ENCODE measurements at regions of chr14 and their contacts with region 1.

Region 1: GRCh38 chr14:54773171-54773975 is 129.3 kb downstream of the GCH1 start:
- DNase-seq: peak in 2 of 3 donors; percentile 71
- ATAC-seq: peak; percentile 67 to 84 (median 78)
- H3K4me3 ChIP-seq: no peak overlapping the region
- H3K27ac ChIP-seq: peak overlapping the region; percentile 32 to 45 (median 43)
- H3K4me1 ChIP-seq: peaks cover 0 to 44% (median 15%) of the 10 kb centered on the region in 4 donors
- H3K27me3 ChIP-seq: no peaks in the 10 kb centered on the region
- CTCF ChIP-seq: peak; percentile 46 to 71 (median 48)
- POLR2A ChIP-seq: no peak

Region 2: DNA sequence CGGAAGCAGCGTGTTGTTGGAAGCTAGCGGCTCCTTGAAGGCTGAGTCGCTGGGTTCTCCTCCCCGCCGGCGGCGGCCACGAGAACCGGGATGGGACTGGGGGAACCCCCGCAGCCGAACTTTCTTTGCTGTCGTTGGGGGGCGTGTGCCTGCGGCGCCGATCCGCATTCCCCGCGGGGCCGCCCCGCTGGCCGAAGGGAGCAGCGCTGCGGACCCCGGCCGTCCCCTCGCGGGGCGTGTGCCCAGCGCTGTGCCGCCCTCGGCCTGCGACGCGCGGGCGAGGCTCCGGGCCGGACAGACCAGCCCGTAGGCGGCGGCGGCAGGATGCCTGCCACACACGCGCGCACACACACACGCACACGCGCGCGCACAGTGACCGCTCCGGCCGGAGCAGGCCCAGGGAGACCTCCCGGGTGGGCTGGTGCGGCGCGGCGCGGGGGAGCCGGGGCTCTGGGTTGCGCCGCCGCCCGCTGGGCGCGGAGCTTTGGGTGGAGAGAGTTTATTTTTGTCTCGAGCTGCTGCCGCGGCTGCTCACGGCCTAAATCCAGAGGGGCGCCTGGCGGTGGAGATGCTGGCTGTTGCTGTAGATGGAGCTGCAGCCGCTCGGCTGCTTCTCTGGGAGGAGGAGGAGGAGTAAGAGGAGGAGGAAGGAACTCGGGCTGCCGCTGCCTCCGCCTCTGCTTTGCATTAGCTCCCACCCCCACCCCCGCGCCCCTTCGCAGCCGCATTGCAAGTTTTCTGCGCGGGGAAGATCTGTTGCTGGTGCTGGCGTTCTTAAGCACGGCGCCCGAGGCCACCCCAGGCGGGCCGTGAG is 206.8 kb before region 1 on chr14 and contains the start of gene SAMD4A:
- intact Hi-C with region 1: loop called (anchors 5 to 10 kb)
- DNase-seq: peak; percentile 74 to 84 (median 78)
- ATAC-seq: peak; percentile 22 to 42 (median 30)
- H3K4me3 ChIP-seq: peak within 1 kb of the TSS; percentile 51 to 73 (median 66)
- H3K27ac ChIP-seq: peak within 1 kb of the TSS; percentile 96 to 99 (median 98)
- H3K4me1 ChIP-seq: peaks cover 0 to 17% (median 0%) of the 10 kb centered on the region in 4 donors
- H3K27me3 ChIP-seq: no peaks in the 10 kb centered on the region
- CTCF ChIP-seq: peak in 3 of 4 donors; percentile 17 to 39 (median 21)
- POLR2A ChIP-seq: peak; percentile 48
- total RNA-seq, gene SAMD4A: 16.7 to 31.9 (median 21.1) TPM

Region 3: DNA sequence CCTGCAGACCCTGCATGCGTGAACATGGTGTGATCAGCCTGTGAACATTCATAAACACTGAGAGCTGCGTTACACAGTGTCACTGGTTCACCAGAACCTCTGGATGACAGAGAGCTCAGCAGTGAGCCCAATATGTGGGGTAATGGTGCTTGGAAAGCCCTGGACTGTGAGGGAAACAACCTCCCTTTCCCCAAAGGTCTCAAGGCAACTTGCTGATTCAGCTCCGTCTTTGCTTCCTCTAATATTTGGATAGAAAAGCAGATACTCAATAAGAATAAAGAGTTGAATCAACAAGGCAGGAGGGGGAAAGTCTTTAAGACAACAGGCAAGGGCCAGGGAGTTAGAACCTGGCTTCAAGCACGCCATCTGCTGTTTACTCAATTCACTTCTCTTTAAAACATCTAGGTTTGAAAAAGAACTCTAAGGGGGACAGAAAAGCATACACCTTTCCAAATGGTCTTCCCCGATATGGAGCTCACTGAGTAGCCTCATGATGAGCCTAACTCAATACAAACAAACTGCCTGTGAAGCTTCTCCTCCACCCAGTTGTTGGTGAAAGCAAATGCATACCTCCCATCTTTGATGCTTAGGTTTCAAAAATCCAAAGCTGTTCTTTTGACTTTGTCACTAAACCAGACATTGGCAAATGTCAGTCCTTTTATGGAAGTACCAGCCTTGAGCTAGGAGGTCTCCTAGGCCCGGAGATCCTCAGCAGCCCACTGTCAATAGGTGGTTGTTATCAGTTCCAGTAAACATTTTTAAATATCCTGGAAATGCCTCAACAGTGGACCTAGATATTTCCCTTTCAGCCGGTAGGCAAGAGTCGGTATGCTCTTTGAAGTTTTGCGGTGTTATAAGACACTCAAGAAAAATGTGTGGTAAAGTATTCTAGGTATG is 130.3 kb before region 1 on chr14:
- intact Hi-C with region 1: no loop called
- DNase-seq: no peak
- ATAC-seq: peak in 2 of 4 donors; percentile 27 to 35
- H3K4me3 ChIP-seq: no peak overlapping the region
- H3K27ac ChIP-seq: no peak overlapping the region
- H3K4me1 ChIP-seq: no peaks in the 10 kb centered on the region
- H3K27me3 ChIP-seq: no peaks in the 10 kb centered on the region
- CTCF ChIP-seq: no peak
- POLR2A ChIP-seq: no peak

Region 4: DNA sequence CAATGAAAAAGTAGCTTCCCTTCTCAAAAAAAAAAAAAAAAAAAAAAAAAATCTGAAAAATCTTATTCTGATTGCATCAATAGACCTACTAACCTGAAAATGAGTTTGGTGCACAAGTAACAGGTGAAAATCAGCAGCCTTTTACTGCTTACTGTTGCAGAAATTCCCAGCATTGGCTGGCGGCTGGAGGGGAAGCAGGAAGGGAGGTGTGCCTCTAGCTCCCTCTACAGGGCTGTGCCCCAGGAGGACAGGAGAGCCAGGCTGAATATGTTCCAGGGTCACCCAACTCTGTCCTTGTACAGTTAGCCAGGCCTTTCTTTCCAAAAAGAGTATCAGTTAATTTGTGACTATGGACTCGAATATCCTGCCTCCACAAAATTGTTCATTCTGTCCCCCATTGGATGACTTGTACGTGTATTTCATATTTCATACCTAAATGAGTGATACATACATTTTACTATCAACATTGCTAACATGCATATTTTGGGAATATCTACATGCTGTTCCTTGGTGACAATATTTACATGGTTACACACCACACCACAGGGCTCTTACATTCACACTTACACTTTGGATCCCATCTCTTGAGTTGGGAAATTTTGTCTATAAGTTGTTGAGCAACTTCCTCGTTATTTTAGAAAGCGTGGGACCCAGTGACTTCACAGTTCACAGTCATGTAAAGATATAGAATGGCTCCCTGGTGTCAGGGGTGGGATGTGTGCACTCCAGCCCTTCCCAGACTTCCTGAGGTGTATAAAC is 81.7 kb before region 1 on chr14:
- intact Hi-C with region 1: loop called in 1 of 2 experiments (anchors 5 kb)
- DNase-seq: peak; percentile 79 to 81 (median 79)
- ATAC-seq: peak; percentile 95 to 99 (median 98)
- H3K4me3 ChIP-seq: no peak overlapping the region
- H3K27ac ChIP-seq: no peak overlapping the region
- H3K4me1 ChIP-seq: no peaks in the 10 kb centered on the region
- H3K27me3 ChIP-seq: no peaks in the 10 kb centered on the region
- CTCF ChIP-seq: peak; percentile 78 to 88 (median 86)
- POLR2A ChIP-seq: no peak